Esophagus squamous epithelium (tissue), 5 donors: ENCODE measurements at regions of chr1 and their contacts with region 1.

Region 1: GRCh38 chr1:28602536-28603439 is 10.7 kb downstream of the RAB42 start:
- DNase-seq: no peak
- H3K4me3 ChIP-seq: no peak overlapping the region
- H3K27ac ChIP-seq: no peak overlapping the region
- H3K4me1 ChIP-seq: peaks cover 0 to 15% (median 5%) of the 10 kb centered on the region in 3 donors
- H3K27me3 ChIP-seq: no peaks in the 10 kb centered on the region
- CTCF ChIP-seq: peak; percentile 37 to 72 (median 64)
- POLR2A ChIP-seq: no peak

Region 2: DNA sequence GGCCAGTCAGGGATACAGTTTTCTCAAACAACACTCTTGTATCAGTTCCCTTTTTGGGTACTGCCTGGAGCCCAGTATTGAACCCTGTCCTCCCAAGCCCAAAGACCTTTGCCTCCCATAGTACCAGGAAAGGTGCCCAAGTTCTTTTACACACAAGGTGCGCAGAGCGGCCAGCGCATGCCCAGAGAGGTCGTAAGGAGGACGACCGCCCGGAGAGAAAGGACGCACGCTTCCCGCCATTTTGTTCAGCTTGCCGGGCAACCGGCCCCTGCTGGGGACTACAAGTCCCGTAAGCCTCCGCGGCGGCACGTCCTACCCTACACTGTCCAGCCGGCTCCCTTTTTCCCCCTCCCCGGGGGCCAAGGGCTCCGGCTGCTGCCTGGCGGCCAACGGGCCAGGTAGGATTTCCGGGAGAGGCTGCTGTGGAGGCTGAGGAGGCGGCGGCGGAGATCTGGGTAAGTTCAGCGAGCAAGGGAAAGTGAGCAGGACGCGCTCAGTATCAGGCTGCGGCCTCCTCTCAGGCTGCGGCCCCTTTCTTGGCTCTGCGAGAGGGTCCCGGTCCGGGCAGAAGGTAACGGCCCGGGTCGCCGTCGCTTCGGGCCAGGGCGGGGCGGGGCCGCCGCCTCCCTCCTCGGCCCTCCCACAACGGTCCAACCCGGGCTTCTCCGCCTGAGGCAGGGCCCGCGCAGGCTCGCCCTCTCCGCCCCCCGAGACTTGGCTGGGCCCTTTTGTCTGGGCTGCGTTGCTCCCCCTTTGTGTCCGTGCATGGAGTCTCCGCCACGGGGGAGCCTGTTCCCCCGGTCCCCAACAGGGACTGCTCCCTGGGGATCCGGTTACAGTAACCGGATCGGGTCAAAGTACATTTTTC is 233.2 kb before region 1 on chr1 and contains the start of gene PHACTR4:
- intact Hi-C with region 1: no loop called
- DNase-seq: peak; percentile 35
- H3K4me3 ChIP-seq: peak within 1 kb of the TSS; percentile 73 to 93 (median 89)
- H3K27ac ChIP-seq: peak within 1 kb of the TSS; percentile 92 to 97 (median 96)
- H3K4me1 ChIP-seq: peaks cover 26 to 68% (median 26%) of the 10 kb centered on the region in 3 donors
- H3K27me3 ChIP-seq: no peaks in the 10 kb centered on the region
- CTCF ChIP-seq: peak in 1 of 6 experiments; percentile 19
- POLR2A ChIP-seq: peak in 2 of 4 donors; percentile 67
- total RNA-seq, gene PHACTR4: 33.4 to 41.0 (median 36.3) TPM

Region 3: GRCh38 chr1:28409090-28409489 is 193.7 kb before region 1 on chr1:
- intact Hi-C with region 1: loop called (anchors 10 kb)
- DNase-seq: no peak
- H3K4me3 ChIP-seq: no peak overlapping the region
- H3K27ac ChIP-seq: no peak overlapping the region
- H3K4me1 ChIP-seq: peaks cover 0 to 5% (median 0%) of the 10 kb centered on the region in 3 donors
- H3K27me3 ChIP-seq: no peaks in the 10 kb centered on the region
- CTCF ChIP-seq: no peak
- POLR2A ChIP-seq: no peak

Region 4: DNA sequence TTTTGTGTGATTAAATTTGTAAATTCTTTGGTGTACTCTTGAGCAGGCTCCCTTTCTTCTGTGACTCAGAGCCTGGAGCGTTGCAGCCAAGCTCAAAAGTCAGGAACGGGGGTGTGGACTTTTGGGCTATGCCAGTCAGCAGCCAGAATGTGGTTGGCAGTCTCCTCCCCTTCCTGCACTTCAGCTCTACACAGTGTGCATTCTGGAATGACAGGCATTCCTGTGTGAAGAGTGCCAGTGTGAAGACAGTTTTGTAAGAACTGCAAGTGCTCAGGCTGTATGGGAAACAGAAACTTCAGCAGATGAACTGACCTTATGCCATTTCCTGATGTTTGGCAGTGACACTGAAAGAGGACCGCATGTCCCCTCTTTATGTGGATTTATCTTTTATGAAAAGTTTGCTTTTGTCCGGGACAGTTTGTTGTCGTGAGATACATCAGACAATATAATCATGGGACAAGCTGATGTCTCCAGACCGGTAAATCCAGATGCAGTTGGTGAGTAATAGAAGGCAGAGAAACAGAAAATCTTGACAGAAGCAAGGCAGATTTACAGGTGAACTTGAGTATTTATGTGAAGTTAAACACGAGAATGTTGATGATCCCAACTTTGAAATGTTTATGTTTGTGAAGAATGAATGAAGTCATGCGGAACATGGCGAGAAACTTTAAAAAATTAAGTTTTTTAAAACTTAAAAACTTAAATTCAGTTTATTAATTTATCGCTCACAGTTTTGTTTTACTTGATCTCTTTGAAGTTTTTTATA is 164.7 kb before region 1 on chr1:
- intact Hi-C with region 1: no loop called
- DNase-seq: peak; percentile 21
- H3K4me3 ChIP-seq: peak overlapping the region; percentile 24 to 54 (median 42)
- H3K27ac ChIP-seq: peak overlapping the region; percentile 78 to 87 (median 82)
- H3K4me1 ChIP-seq: peaks cover 0 to 63% (median 11%) of the 10 kb centered on the region in 3 donors
- H3K27me3 ChIP-seq: no peaks in the 10 kb centered on the region
- CTCF ChIP-seq: no peak
- POLR2A ChIP-seq: peak in 3 of 4 donors; percentile 20 to 76 (median 65)

Region 5: GRCh38 chr1:28519946-28520725 is 82.7 kb before region 1 on chr1:
- intact Hi-C with region 1: loop called (anchors 5 kb)
- DNase-seq: no peak
- H3K4me3 ChIP-seq: no peak overlapping the region
- H3K27ac ChIP-seq: no peak overlapping the region
- H3K4me1 ChIP-seq: peaks cover 13 to 29% (median 15%) of the 10 kb centered on the region in 3 donors
- H3K27me3 ChIP-seq: no peaks in the 10 kb centered on the region
- CTCF ChIP-seq: no peak
- POLR2A ChIP-seq: no peak